A549 (cell line): ENCODE measurements at regions of chr15 and their contacts with region 1.

Region 1: DNA sequence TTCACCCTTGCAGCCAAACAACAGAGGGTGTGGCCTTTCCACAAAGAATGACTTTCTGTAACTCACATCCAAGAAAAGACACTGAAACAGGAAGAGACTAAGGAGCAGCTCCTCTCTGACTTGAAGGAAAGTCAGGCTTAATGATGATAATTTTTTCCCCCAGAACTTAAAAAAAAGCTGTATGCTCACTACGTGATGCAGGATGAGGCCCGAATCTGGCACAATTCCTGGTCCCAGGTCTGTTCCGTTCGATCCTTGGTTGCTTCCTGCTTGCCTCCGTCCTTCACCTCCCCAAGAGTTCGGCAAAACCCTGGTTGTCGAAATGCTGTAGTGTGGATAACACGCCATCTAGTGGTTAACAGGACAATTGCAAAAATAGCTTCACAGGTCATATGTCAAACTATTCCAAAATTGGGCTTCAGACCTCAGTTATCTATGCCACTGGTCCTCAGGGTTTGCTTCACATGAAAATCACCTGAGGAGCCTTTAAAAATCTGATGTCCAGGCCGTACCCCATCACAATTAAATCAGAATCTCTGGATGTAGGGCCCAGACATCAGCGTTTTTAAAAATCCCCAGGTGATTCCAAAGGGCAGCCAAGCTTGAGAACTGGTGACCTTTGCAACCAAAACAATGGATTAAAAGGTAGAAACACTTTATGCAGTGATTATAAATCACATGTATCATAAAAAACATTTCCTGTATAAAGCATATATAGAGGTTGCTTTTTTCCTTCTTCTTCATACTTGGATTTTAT is 28.1 kb upstream of the SYNM start:
- DNase-seq: peak; percentile 80 to 91
- ATAC-seq: peak; percentile 94 to 95
- H3K4me3 ChIP-seq: peak overlapping the region; percentile 8; the same call in 2 of the 3 replicates
- H3K27ac ChIP-seq: peak overlapping the region; percentile 66 to 79
- H3K4me1 ChIP-seq: peaks cover 11% of the 10 kb centered on the region
- CTCF ChIP-seq: peak; percentile 97
- EP300 ChIP-seq: no peak
- POLR2A ChIP-seq: no peak
- RAD21 ChIP-seq: peak; percentile 98 to 100

Region 2: GRCh38 chr15:98779463-98780071 is 297.2 kb before region 1 on chr15:
- CTCF ChIA-PET with region 1: interaction called, 11 read pairs
- POLR2A ChIA-PET with region 1: no interaction called
- DNase-seq: peak; percentile 85 to 87
- ATAC-seq: peak; percentile 95
- H3K4me3 ChIP-seq: no peak overlapping the region
- H3K27ac ChIP-seq: peak overlapping the region; percentile 67 to 73
- H3K4me1 ChIP-seq: peaks cover 79% of the 10 kb centered on the region
- CTCF ChIP-seq: peak; percentile 97
- EP300 ChIP-seq: no peak
- POLR2A ChIP-seq: no peak
- RAD21 ChIP-seq: peak; percentile 95 to 97

Region 3: GRCh38 chr15:98865397-98866339 is 211.1 kb before region 1 on chr15:
- CTCF ChIA-PET with region 1: interaction called, 12 read pairs
- POLR2A ChIA-PET with region 1: interaction called, 3 read pairs
- DNase-seq: peak in 1 of 2 experiments; percentile 94
- ATAC-seq: peak; percentile 76 to 82
- H3K4me3 ChIP-seq: peak overlapping the region; percentile 35
- H3K27ac ChIP-seq: peak overlapping the region; percentile 95 to 97
- H3K4me1 ChIP-seq: peaks cover 96% of the 10 kb centered on the region
- CTCF ChIP-seq: no peak
- EP300 ChIP-seq: no peak
- POLR2A ChIP-seq: peak; percentile 18
- RAD21 ChIP-seq: no peak

Region 4: DNA sequence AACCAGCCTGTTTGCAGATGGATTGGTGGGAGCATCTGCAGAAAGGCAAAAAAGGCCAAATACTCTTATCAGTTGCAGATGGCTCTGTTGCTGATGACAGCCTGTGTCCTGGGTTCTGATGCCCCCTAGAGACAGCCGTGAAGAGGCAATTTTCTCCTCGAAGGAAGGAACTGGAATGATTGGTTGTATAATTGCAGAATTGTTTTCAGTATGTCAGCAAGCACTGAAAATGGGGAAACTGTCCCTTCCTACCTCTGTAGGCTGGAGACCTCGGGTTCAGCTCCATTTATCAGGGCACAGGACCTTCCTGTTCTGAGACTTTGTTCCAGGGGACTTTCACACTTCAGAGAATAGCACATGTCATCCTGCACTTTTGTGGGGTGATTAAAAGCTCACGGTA is 172.2 kb before region 1 on chr15:
- CTCF ChIA-PET with region 1: interaction called, 24 read pairs
- POLR2A ChIA-PET with region 1: no interaction called
- DNase-seq: peak; percentile 85 to 89
- ATAC-seq: peak; percentile 77 to 79
- H3K4me3 ChIP-seq: no peak overlapping the region
- H3K27ac ChIP-seq: peak overlapping the region; percentile 94 to 97
- H3K4me1 ChIP-seq: peaks cover 85% of the 10 kb centered on the region
- CTCF ChIP-seq: peak; percentile 91
- EP300 ChIP-seq: no peak
- POLR2A ChIP-seq: no peak
- RAD21 ChIP-seq: peak; percentile 95 to 98

Region 5: GRCh38 chr15:99037646-99038045 is 39.1 kb before region 1 on chr15:
- CTCF ChIA-PET with region 1: no interaction called
- POLR2A ChIA-PET with region 1: no interaction called
- DNase-seq: no peak
- ATAC-seq: no peak
- H3K4me3 ChIP-seq: no peak overlapping the region
- H3K27ac ChIP-seq: no peak overlapping the region
- H3K4me1 ChIP-seq: no peaks in the 10 kb centered on the region
- CTCF ChIP-seq: no peak
- EP300 ChIP-seq: no peak
- POLR2A ChIP-seq: no peak
- RAD21 ChIP-seq: no peak

Region 6: DNA sequence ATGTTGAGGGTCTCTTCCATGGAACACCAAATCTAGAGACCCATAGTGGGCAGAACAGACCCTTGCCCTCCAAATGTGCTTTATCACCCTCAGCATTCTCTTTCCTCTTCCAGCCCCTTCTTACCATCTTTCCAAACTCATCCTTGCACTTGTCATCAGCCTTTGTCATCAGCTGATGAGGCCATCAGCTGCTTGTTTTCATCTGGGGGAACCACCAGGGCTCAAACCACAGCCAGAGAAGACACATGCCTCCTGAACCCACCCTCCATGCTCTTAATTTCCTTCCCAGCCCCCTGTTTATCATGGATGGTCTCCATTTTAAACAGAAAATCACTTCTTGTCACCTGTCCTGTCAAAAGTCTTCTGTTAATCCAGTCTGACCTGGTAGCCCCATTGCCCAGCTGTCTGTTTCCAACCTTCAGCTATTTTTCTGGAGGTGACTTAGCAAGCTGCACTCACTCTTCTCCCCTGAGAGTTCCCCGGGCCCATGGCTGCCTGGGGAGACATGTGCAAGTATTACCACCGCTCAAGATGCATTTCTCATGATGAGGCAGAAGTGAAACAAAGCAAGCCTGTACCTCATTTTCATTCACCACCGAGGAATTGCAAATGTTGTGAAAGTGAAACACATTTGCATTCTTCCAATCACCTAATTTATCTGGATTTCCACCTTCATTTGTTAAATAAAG is 13.4 kb after region 1 on chr15:
- CTCF ChIA-PET with region 1: interaction called, 37 read pairs
- POLR2A ChIA-PET with region 1: no interaction called
- DNase-seq: no peak
- ATAC-seq: no peak
- H3K4me3 ChIP-seq: no peak overlapping the region
- H3K27ac ChIP-seq: no peak overlapping the region
- H3K4me1 ChIP-seq: no peaks in the 10 kb centered on the region
- CTCF ChIP-seq: no peak
- EP300 ChIP-seq: no peak
- POLR2A ChIP-seq: no peak
- RAD21 ChIP-seq: no peak